AG04450 (cell line): ENCODE measurements at regions of chr9 and their contacts with region 1.

Region 1: GRCh38 chr9:75238311-75238978 is 150.1 kb downstream of the OSTF1 start:
- DNase-seq: peak; percentile 15
- H3K4me3 ChIP-seq: no peak overlapping the region
- H3K27ac ChIP-seq: no peak overlapping the region
- H3K27me3 ChIP-seq: no peaks in the 10 kb centered on the region
- CTCF ChIP-seq: peak; percentile 69

Region 2: DNA sequence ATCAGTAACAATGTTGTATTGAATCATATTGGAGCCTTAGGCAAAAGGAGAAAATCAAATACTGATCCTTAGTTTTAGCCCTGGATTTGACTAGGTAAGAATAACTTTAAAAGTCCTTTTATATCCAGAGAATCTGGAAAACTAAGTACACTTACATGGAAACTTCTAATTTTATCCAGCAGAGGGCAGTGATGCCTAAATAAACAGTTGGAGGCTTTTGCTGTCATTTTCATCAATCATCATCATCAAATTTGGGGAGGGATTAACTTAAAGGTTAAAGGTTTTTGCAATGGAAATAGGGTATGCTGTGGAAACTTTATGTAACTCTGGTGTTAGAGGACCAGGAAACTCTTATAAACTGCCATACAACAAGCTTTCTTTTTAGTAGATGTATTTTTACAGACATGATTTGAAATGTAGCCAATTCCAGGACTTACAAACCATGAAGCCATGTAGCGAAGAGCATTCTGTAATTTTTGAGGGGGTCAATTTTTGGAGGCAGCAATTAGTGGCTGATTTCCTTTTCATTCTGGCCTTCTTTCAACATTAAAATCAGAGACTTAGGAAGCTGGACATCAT is 37.5 kb before region 1 on chr9:
- CTCF ChIA-PET with region 1: interaction called, 20 read pairs
- POLR2A ChIA-PET with region 1: no interaction called
- DNase-seq: no peak
- H3K4me3 ChIP-seq: no peak overlapping the region
- H3K27ac ChIP-seq: no peak overlapping the region
- H3K27me3 ChIP-seq: no peaks in the 10 kb centered on the region
- CTCF ChIP-seq: peak; percentile 65

Region 3: GRCh38 chr9:75601279-75601678 is 362.8 kb after region 1 on chr9:
- CTCF ChIA-PET with region 1: no interaction called
- POLR2A ChIA-PET with region 1: no interaction called
- DNase-seq: no peak
- H3K4me3 ChIP-seq: no peak overlapping the region
- H3K27ac ChIP-seq: no peak overlapping the region
- H3K27me3 ChIP-seq: no peaks in the 10 kb centered on the region
- CTCF ChIP-seq: no peak

Region 4: DNA sequence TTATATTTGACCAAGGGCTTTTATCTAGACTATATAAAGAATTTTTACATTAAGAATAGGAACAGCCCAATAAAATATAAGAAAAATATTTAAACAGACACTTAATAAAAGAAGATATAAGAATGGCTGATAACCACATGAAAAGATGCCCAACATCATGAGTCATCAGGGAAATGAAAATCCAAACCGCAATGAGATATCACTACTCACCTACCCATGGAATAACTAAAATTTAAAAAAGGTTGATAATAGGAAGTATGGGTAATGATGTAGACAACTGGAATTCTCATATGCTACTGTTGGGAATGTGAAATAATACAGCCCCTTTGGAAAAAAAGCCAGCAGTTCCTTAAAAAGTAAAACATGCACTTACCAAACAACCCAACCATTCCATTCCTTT is 445.1 kb after region 1 on chr9:
- CTCF ChIA-PET with region 1: no interaction called
- POLR2A ChIA-PET with region 1: no interaction called
- DNase-seq: no peak
- H3K4me3 ChIP-seq: no peak overlapping the region
- H3K27ac ChIP-seq: no peak overlapping the region
- H3K27me3 ChIP-seq: no peaks in the 10 kb centered on the region
- CTCF ChIP-seq: no peak